CD4-positive, alpha-beta T cell (primary cell): ENCODE measurements at regions of chr10 and their contacts with region 1.

Region 1: DNA sequence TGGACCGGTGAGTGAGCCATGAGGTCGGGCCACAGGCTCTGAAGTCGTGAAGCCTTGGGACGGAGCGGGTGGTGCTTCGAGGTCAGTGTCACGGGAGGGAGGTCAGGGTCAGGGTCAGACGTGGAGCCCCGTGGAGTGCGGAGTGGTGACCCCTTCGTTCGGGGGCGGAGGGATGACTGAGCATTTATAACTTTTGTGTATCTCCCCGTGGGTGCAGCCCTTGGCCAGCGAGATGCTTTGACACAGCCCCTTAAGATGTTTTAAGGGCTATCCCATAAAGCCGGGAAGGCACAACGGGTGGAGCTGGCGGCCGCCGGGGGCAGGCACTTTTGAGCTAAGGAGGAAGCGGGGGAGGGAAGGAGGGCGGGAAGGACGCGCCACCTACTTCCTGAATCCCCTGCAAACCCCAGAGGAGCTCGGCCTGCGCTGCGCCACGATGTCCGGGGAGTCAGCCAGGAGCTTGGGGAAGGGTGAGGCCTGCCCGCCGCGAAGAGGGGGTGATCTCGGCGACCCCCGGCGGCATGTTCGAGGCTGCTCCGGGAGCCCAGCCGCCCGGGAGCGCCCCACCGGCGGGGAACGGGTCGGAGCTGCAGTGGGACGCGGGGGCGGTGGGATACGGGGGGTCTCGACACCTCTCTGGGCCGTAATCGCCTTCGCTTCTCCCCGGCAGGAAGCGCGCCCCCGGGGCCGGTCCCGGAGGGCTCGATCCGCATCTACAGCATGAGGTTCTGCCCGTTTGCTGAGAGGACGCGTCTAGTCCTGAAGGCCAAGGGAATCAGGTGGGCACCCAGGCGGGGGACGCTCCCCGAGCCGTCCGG is at the start of gene GSTO1:
- DNase-seq: peak in 13 of 14 experiments; percentile 13 to 77 (median 46)
- ATAC-seq: peak; percentile 50
- H3K4me3 ChIP-seq: peak within 1 kb of the TSS; percentile 98
- H3K4me3 Mint-ChIP-seq: peak within 1 kb of the TSS; percentile 99
- H3K27ac ChIP-seq: peak within 1 kb of the TSS; percentile 73 to 83
- H3K27ac Mint-ChIP-seq: peak within 1 kb of the TSS; percentile 87
- H3K4me1 ChIP-seq: peaks cover 27% of the 10 kb centered on the region
- H3K4me1 Mint-ChIP-seq: peaks cover 51% of the 10 kb centered on the region
- H3K27me3 ChIP-seq: no peaks in the 10 kb centered on the region
- H3K27me3 Mint-ChIP-seq: no peaks in the 10 kb centered on the region
- CTCF ChIP-seq: no peak
- total RNA-seq, gene GSTO1: 23.9 to 26.1 TPM

Region 2: GRCh38 chr10:104231784-104232612 is 22.7 kb before region 1 on chr10 and contains the start of gene CFAP43:
- CTCF ChIA-PET with region 1: interaction called, 3 read pairs
- POLR2A ChIA-PET with region 1: interaction called, 11 read pairs
- intact Hi-C with region 1: loop called in 1 of 2 experiments (anchors 2 kb)
- DNase-seq: peak; percentile 99 to 100 (median 99)
- ATAC-seq: peak; percentile 99
- H3K4me3 ChIP-seq: peak within 1 kb of the TSS; percentile 74
- H3K4me3 Mint-ChIP-seq: peak within 1 kb of the TSS; percentile 96
- H3K27ac ChIP-seq: no peak within 1 kb of the TSS
- H3K27ac Mint-ChIP-seq: peak within 1 kb of the TSS; percentile 83
- H3K4me1 ChIP-seq: peaks cover 13% of the 10 kb centered on the region
- H3K4me1 Mint-ChIP-seq: peaks cover 14% of the 10 kb centered on the region
- H3K27me3 ChIP-seq: peaks cover 6 to 9% of the 10 kb centered on the region in 2 experiments
- H3K27me3 Mint-ChIP-seq: peaks cover 33% of the 10 kb centered on the region
- CTCF ChIP-seq: no peak
- total RNA-seq, gene CFAP43: not detected

Region 3: GRCh38 chr10:105195831-105196230 is 941.1 kb after region 1 on chr10:
- CTCF ChIA-PET with region 1: no interaction called
- POLR2A ChIA-PET with region 1: no interaction called
- intact Hi-C with region 1: no loop called
- DNase-seq: no peak
- ATAC-seq: no peak
- H3K4me3 ChIP-seq: no peak overlapping the region
- H3K4me3 Mint-ChIP-seq: no peak overlapping the region
- H3K27ac ChIP-seq: no peak overlapping the region
- H3K27ac Mint-ChIP-seq: no peak overlapping the region
- H3K4me1 ChIP-seq: no peaks in the 10 kb centered on the region
- H3K4me1 Mint-ChIP-seq: no peaks in the 10 kb centered on the region
- H3K27me3 ChIP-seq: no peaks in the 10 kb centered on the region
- H3K27me3 Mint-ChIP-seq: no peaks in the 10 kb centered on the region
- CTCF ChIP-seq: no peak